MCF 10A (cell line): ENCODE measurements at regions of chr20 and their contacts with region 1.

Region 1: GRCh38 chr20:63495741-63496595 is 2.9 kb downstream of the EEF1A2 start:
- DNase-seq: peak; percentile 67
- H3K4me3 Mint-ChIP-seq: peak overlapping the region; percentile 23
- H3K27ac Mint-ChIP-seq: no peak overlapping the region
- H3K4me1 Mint-ChIP-seq: no peaks in the 10 kb centered on the region
- H3K27me3 Mint-ChIP-seq: no peaks in the 10 kb centered on the region
- CTCF ChIP-seq: peak; percentile 90

Region 2: DNA sequence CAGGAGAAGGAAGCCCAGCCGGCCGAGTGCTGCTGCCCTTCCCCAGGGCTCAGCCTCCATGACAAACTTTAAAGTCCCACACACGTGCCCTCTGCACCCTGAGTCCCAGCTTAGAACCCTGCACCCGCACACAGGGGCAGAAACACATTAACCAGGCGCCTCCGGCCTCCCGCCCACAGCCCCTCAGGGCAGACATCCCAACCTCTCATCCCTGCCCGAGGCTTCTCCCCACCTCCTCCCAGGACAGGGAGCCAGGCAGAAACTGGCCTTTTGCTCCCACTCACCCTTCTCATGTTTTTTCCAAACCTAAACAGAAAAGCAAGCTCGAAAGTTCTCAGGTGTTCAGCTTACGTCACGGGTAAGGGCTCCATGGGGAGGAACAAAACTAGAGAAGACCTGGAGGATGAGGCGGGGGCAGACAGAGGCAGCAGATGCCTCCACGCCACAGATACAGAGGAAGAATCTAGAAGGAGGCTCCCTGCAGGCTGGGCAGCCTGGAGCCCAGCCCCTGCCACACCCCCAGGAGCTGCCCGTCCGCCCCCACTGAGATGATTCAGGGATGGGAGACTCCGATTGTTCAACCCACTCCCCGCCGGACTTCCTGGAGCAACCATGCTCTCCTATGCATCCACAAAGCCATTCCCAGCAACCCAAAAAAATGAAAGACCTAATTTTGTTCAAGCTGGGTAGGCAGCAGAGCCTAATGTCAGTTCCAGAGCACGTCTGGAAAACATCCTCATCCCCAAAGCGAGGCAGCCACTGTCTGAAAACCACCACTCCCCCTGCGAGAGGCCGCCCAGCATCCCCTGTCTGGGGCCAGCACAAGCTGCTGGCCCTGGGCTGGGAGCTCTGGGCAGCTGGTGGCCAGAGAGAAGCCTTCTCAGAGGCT is 32.3 kb before region 1 on chr20:
- CTCF ChIA-PET with region 1: interaction called, 14 read pairs
- POLR2A ChIA-PET with region 1: interaction called, 3 read pairs
- intact Hi-C with region 1: no loop called
- DNase-seq: no peak
- H3K4me3 Mint-ChIP-seq: no peak overlapping the region
- H3K27ac Mint-ChIP-seq: no peak overlapping the region
- H3K4me1 Mint-ChIP-seq: no peaks in the 10 kb centered on the region
- H3K27me3 Mint-ChIP-seq: peaks cover 53% of the 10 kb centered on the region
- CTCF ChIP-seq: no peak

Region 3: DNA sequence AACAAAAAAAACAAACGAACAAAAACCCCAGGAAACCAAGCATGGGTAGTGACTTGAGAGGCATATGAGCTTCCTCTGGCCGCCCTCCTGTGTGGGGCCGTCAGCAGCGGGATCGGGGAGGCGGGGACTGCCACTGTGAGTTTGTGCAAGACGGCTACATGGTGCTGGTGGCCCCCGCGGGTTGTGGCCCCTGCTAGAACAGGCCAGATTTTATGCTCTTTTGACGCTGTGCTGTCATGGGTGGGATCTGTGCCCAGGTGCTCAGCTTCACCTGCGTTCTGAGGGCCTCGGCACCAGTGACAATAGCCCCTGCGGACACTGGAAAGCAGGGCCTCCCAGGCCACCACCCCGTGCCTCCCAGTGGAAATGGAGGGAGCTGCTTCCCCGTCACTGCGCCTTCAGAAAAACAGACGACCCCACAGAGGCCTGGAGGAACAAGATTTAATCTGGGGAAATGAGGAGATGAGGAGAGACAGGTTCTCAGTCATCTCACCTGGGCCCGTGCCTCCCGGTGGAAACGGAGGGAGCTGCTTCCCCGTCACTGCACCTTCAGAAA is 18.8 kb before region 1 on chr20:
- CTCF ChIA-PET with region 1: interaction called, 10 read pairs
- POLR2A ChIA-PET with region 1: interaction called, 4 read pairs
- intact Hi-C with region 1: no loop called
- DNase-seq: no peak
- H3K4me3 Mint-ChIP-seq: no peak overlapping the region
- H3K27ac Mint-ChIP-seq: no peak overlapping the region
- H3K4me1 Mint-ChIP-seq: peaks cover 8% of the 10 kb centered on the region
- H3K27me3 Mint-ChIP-seq: peaks cover 50% of the 10 kb centered on the region
- CTCF ChIP-seq: no peak

Region 4: DNA sequence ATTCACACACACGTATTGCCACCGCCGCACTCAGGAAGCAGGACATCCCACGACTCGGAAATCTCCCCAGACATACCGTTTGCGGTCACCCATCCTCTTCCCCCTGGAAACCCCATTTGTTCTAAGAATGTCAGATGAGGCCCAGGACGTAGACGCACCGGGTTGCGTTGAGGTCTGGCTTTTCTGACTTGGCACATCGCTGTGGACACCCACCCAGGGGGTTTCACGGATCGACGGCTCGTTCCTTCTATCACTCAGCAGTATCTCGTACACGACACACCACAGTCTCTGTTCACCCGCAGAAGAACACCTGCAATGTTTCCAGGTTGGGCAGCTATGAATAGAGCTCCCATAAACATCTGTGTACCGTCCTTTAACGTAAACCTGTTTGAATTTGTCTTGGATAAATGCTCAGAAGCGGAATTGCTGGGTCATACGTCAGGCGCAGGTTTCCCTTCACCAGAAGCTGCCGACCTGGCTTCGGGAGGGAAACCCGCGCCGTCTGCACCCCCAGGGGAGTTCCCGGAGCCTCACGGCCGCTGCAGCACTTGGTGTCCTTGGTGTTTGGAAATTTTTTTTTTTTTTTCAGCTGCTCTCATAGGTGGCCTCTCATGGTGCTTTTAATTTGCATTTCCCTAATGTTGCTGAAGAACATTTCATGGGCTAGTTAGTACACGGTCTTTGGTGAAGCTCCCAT is 12.3 kb after region 1 on chr20:
- CTCF ChIA-PET with region 1: interaction called, 12 read pairs
- POLR2A ChIA-PET with region 1: no interaction called
- intact Hi-C with region 1: no loop called
- DNase-seq: no peak
- H3K4me3 Mint-ChIP-seq: no peak overlapping the region
- H3K27ac Mint-ChIP-seq: no peak overlapping the region
- H3K4me1 Mint-ChIP-seq: peaks cover 8% of the 10 kb centered on the region
- H3K27me3 Mint-ChIP-seq: peaks cover 42% of the 10 kb centered on the region
- CTCF ChIP-seq: no peak

Region 5: DNA sequence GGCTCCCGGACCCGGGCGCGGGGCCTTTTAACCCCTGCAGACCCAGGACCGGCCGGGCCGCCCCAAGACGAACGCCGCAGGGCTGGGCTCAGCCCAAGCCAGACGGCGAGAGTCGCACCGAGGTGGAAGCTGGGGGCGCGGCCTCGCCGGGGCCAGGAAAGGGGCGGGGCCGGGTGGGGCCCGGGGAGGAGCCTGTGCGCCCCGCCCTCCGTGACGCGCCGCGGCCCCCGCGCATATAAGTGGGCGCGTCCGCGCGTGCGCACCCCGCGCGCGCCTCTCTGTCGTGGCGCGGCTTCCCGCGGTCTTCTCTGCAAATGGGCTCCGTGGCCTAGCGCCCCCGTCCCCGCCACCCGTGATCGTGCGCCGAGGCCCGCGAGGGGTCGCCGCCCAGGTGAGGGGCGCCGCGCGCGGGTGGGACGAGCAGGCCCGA is 24.6 kb after region 1 on chr20 and contains the start of gene PPDPF:
- CTCF ChIA-PET with region 1: interaction called, 16 read pairs
- POLR2A ChIA-PET with region 1: interaction called, 17 read pairs
- intact Hi-C with region 1: no loop called
- DNase-seq: peak; percentile 75
- H3K4me3 Mint-ChIP-seq: peak within 1 kb of the TSS; percentile 83
- H3K27ac Mint-ChIP-seq: peak within 1 kb of the TSS; percentile 42
- H3K4me1 Mint-ChIP-seq: no peaks in the 10 kb centered on the region
- H3K27me3 Mint-ChIP-seq: no peaks in the 10 kb centered on the region
- CTCF ChIP-seq: no peak
- total RNA-seq, gene PPDPF: 315 and 355 TPM in 2 replicates